Heart right ventricle (tissue), 16 donors: ENCODE measurements at regions of chr1 and their contacts with region 1.

Region 1: GRCh38 chr1:95116580-95117206 is 462 bp upstream of the TLCD4 start:
- DNase-seq: peak; percentile 38 to 56
- ATAC-seq: peak; percentile 59 to 89 (median 80)
- H3K4me3 ChIP-seq: peak overlapping the region; percentile 57 to 82 (median 70)
- H3K27ac ChIP-seq: peak overlapping the region; percentile 68 to 93 (median 82)
- H3K4me1 ChIP-seq: peaks cover 0 to 33% (median 14%) of the 10 kb centered on the region in 9 donors
- H3K27me3 ChIP-seq: peaks cover 0 to 67% (median 3%) of the 10 kb centered on the region in 7 donors
- CTCF ChIP-seq: peak; percentile 18 to 69 (median 53)

Region 2: DNA sequence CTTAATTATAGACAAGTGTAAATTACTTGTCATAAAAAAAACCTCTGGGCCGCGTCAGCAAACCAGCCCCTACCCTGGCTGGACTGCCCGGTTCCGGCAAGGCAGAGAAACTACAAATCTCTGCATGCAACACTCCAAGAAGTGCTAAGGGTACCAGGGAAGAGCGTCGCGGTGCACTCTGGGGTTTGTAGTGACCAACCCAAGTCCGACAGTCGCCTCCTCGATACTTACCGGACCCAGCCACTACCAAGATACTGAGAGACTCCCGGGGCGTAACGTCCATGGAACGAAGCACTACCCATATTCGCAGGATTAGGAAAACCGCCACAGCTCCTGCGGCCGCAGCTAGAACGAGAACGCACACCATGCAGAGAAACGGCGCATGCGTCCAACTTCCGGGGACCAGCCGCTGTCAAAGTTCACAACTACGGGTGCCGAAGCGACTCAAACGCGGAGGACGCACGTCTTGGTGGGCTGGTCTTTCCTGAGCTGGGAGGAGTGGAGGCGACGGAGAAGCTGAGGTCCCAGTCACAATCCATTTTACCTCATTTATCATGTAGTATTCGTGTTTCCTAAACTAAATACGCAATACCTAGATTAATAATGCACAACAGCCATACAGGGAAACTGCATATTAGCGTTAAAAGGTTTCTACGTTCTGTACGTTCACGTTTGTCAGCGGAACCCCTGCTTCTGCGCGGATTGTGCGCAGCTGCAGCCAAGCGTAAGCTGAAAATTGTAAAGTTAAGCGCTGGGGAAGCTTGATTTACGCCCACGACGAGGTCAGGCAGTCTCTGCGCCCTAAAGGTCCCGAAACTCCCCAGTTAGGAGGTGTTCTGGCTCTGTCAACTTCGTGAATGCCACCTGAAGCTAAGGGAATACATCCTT is 43.9 kb before region 1 on chr1 and contains the start of gene ALG14:
- intact Hi-C with region 1: loop called in 1 of 10 experiments (anchors 2 kb)
- DNase-seq: peak; percentile 92 to 96
- ATAC-seq: peak; percentile 98 to 99 (median 99)
- H3K4me3 ChIP-seq: peak within 1 kb of the TSS; percentile 36 to 76 (median 66)
- H3K27ac ChIP-seq: peak within 1 kb of the TSS; percentile 79 to 95 (median 91)
- H3K4me1 ChIP-seq: peaks cover 0 to 17% (median 10%) of the 10 kb centered on the region in 9 donors
- H3K27me3 ChIP-seq: peaks cover 0 to 4% (median 0%) of the 10 kb centered on the region in 7 donors
- CTCF ChIP-seq: no peak
- total RNA-seq, gene ALG14: 1.8 to 4.6 (median 3.5) TPM

Region 3: GRCh38 chr1:95154096-95154495 is 37.4 kb after region 1 on chr1:
- intact Hi-C with region 1: no loop called
- DNase-seq: no peak
- ATAC-seq: no peak
- H3K4me3 ChIP-seq: no peak overlapping the region
- H3K27ac ChIP-seq: no peak overlapping the region
- H3K4me1 ChIP-seq: no peaks in the 10 kb centered on the region
- H3K27me3 ChIP-seq: no peaks in the 10 kb centered on the region
- CTCF ChIP-seq: no peak